ENCODE measurements at regions of chr15 and their contacts with region 1.

Region 1: GRCh38 chr15:31435261-31435911 is 108.8 kb downstream of the KLF13 start:
- DNase-seq: peak; percentile 53 to 93 (median 87)
- ATAC-seq: peak; percentile 84
- H3K4me3 ChIP-seq: peak overlapping the region; percentile 48
- H3K4me3 Mint-ChIP-seq: peak overlapping the region; percentile 80 to 95 (median 86)
- H3K27ac ChIP-seq: peak overlapping the region; percentile 83
- H3K27ac Mint-ChIP-seq: peak overlapping the region; percentile 96 to 100 (median 99)
- H3K4me1 ChIP-seq: peaks cover 55 to 58% of the 10 kb centered on the region in 2 donors
- H3K4me1 Mint-ChIP-seq: peaks cover 44 to 90% (median 84%) of the 10 kb centered on the region in 7 donors
- H3K27me3 ChIP-seq: no peaks in the 10 kb centered on the region
- H3K27me3 Mint-ChIP-seq: no peaks in the 10 kb centered on the region

Region 2: GRCh38 chr15:31145271-31145911 is 290.0 kb before region 1 on chr15:
- CTCF ChIA-PET with region 1: no interaction called
- POLR2A ChIA-PET with region 1: no interaction called
- intact Hi-C with region 1: no loop called
- DNase-seq: no peak
- ATAC-seq: no peak
- H3K4me3 ChIP-seq: no peak overlapping the region
- H3K4me3 Mint-ChIP-seq: no peak overlapping the region
- H3K27ac ChIP-seq: no peak overlapping the region
- H3K27ac Mint-ChIP-seq: no peak overlapping the region
- H3K4me1 ChIP-seq: no peaks in the 10 kb centered on the region
- H3K4me1 Mint-ChIP-seq: peaks cover 0 to 4% (median 0%) of the 10 kb centered on the region in 7 donors
- H3K27me3 ChIP-seq: no peaks in the 10 kb centered on the region
- H3K27me3 Mint-ChIP-seq: no peaks in the 10 kb centered on the region

Region 3: DNA sequence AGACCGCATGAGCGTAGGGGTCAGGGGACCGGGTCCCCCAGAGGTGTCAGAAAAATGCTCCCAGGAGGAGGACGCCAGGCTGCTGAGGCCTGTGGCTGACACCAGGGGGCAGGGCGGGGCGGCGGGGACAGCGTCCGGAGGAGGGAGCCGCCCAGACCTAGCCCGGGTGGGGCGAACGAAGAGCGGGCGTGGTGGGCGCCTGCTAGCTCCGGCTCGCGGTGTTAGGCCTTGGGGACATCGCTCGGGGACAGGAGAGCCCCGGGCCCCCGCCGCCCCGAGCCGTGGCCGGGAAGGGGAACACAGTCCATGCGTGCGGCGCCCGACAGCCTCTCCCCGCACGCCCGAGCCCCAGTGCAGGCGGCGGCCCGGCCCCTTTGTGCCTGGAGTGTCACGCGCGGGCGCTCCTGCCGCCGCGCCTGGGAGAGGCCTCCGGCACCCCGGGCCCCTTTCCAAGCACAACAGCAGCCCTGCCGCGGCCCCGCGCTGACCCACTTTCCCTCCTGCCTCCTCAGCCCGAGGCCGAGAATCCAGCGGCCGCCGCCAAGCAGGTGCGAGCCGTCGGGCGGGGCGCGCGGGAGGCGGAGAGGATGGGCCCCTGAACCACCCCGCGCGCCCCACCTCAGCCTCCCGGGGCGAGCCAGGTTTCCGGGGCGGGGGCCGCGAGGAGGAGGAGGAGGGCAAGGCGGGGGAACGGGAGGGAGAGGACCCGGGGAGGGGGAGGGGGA is 219.7 kb before region 1 on chr15:
- CTCF ChIA-PET with region 1: interaction called, 5 read pairs
- POLR2A ChIA-PET with region 1: interaction called, 4 read pairs
- intact Hi-C with region 1: loop called (anchors 1 to 5 kb)
- DNase-seq: peak; percentile 53 to 84 (median 69)
- ATAC-seq: peak; percentile 84
- H3K4me3 ChIP-seq: peak overlapping the region; percentile 30
- H3K4me3 Mint-ChIP-seq: peak overlapping the region; percentile 50 to 90 (median 74)
- H3K27ac ChIP-seq: peak overlapping the region; percentile 76
- H3K27ac Mint-ChIP-seq: peak overlapping the region; percentile 84 to 91 (median 87)
- H3K4me1 ChIP-seq: peaks cover 11 to 14% of the 10 kb centered on the region in 2 donors
- H3K4me1 Mint-ChIP-seq: peaks cover 5 to 54% (median 41%) of the 10 kb centered on the region in 7 donors
- H3K27me3 ChIP-seq: no peaks in the 10 kb centered on the region
- H3K27me3 Mint-ChIP-seq: no peaks in the 10 kb centered on the region

Region 4: DNA sequence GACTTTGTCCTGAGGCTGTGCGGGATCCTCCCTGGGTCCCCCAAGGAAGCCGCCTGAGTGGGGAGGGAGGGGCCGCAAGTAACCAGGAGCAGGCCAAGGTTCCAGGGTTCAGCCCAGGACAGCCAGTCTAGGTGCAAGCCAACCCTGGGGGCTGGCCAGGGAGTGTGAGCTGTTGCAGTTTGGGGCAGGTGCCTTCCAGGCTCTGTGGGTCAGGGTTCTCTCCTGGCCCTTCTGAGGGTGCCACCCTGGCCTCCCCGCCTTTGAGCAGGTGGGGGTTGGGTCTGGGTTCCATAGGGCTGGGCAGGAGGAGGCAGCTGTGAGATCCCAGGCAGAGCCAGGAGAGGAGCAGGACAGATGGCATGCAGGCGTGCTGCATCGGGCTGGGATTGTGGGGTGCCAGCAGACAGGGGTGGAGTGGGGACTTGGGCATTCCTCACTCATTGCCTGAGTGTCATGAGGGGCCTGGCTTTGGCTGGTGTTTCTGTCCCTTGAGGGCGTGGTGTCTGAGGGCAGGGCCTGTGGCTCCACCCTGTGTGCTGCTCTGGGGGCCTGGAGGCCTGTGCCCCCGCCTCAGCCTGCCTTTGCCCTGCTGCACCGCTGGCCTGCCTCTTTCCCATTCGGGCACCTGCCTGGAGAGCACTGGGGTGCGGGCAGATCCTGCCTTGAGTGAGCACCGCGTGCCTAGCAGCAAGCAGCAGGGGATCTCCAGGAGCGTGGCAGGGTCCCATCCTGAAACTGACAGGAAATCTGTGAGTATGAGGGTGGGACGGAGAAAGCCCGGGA is 90.4 kb before region 1 on chr15:
- CTCF ChIA-PET with region 1: interaction called, 4 read pairs
- POLR2A ChIA-PET with region 1: interaction called, 14 read pairs
- intact Hi-C with region 1: loop called (anchors 1 to 5 kb)
- DNase-seq: no peak
- ATAC-seq: no peak
- H3K4me3 ChIP-seq: peak overlapping the region; percentile 44
- H3K4me3 Mint-ChIP-seq: peak overlapping the region; percentile 75 to 94 (median 85)
- H3K27ac ChIP-seq: peak overlapping the region; percentile 94
- H3K27ac Mint-ChIP-seq: peak overlapping the region; percentile 75 to 99 (median 97)
- H3K4me1 ChIP-seq: peaks cover 98 to 100% of the 10 kb centered on the region in 2 donors
- H3K4me1 Mint-ChIP-seq: peaks cover 79 to 100% (median 98%) of the 10 kb centered on the region in 7 donors
- H3K27me3 ChIP-seq: no peaks in the 10 kb centered on the region
- H3K27me3 Mint-ChIP-seq: no peaks in the 10 kb centered on the region

Region 5: GRCh38 chr15:31396881-31397560 is 38.4 kb before region 1 on chr15:
- CTCF ChIA-PET with region 1: interaction called, 6 read pairs
- POLR2A ChIA-PET with region 1: interaction called, 18 read pairs
- intact Hi-C with region 1: loop called (anchors 1 kb)
- DNase-seq: no peak
- ATAC-seq: peak; percentile 65
- H3K4me3 ChIP-seq: no peak overlapping the region
- H3K4me3 Mint-ChIP-seq: no peak overlapping the region
- H3K27ac ChIP-seq: no peak overlapping the region
- H3K27ac Mint-ChIP-seq: no peak overlapping the region
- H3K4me1 ChIP-seq: peaks cover 0 to 12% of the 10 kb centered on the region in 2 donors
- H3K4me1 Mint-ChIP-seq: peaks cover 17 to 46% (median 35%) of the 10 kb centered on the region in 7 donors
- H3K27me3 ChIP-seq: no peaks in the 10 kb centered on the region
- H3K27me3 Mint-ChIP-seq: no peaks in the 10 kb centered on the region

Region 6: GRCh38 chr15:31483053-31483985 is 47.9 kb after region 1 on chr15:
- CTCF ChIA-PET with region 1: interaction called, 65 read pairs
- POLR2A ChIA-PET with region 1: interaction called, 54 read pairs
- intact Hi-C with region 1: loop called (anchors 1 kb)
- DNase-seq: peak; percentile 42 to 63 (median 53)
- ATAC-seq: peak; percentile 80
- H3K4me3 ChIP-seq: peak overlapping the region; percentile 59
- H3K4me3 Mint-ChIP-seq: peak overlapping the region; percentile 91 to 97 (median 96)
- H3K27ac ChIP-seq: no peak overlapping the region
- H3K27ac Mint-ChIP-seq: peak overlapping the region; percentile 90 to 97 (median 94)
- H3K4me1 ChIP-seq: peaks cover 26 to 35% of the 10 kb centered on the region in 2 donors
- H3K4me1 Mint-ChIP-seq: peaks cover 25 to 75% (median 54%) of the 10 kb centered on the region in 7 donors
- H3K27me3 ChIP-seq: no peaks in the 10 kb centered on the region
- H3K27me3 Mint-ChIP-seq: no peaks in the 10 kb centered on the region

Region 7: GRCh38 chr15:32717426-32718226 is 1282.2 kb after region 1 on chr15 and contains the start of gene GREM1:
- CTCF ChIA-PET with region 1: no interaction called
- POLR2A ChIA-PET with region 1: no interaction called
- intact Hi-C with region 1: no loop called
- DNase-seq: no peak
- ATAC-seq: no peak
- H3K4me3 ChIP-seq: no peak within 1 kb of the TSS
- H3K4me3 Mint-ChIP-seq: peak within 1 kb of the TSS in 8 of 10 donors; percentile 16 to 78 (median 43)
- H3K27ac ChIP-seq: no peak within 1 kb of the TSS
- H3K27ac Mint-ChIP-seq: no peak within 1 kb of the TSS
- H3K4me1 ChIP-seq: no peaks in the 10 kb centered on the region
- H3K4me1 Mint-ChIP-seq: peaks cover 8 to 34% (median 22%) of the 10 kb centered on the region in 7 donors
- H3K27me3 ChIP-seq: peaks cover 0 to 4% of the 10 kb centered on the region in 2 donors
- H3K27me3 Mint-ChIP-seq: peaks cover 58 to 90% (median 82%) of the 10 kb centered on the region in 5 donors
- total RNA-seq, gene GREM1: not detected